ENCODE measurements at regions of chr3 and their contacts with region 1.

Region 1: DNA sequence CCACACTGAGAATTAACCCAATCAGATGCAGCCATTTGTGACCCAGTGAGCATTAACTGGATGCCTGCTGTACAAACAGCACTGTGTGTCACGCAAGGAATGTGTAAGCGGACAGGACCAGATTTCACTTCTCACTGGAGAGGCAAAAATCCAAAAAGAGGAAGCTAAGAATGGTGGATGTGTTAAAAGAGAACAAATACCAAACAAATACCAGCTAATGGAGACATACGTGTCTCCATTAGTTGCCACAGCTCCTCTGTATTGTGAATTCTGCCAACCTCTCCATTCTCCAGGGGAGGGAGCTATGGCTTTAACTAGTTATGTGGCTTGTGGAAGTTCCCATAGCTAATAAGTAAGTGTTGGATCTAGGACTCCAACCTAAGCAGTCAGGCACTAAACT is 2.6 kb downstream of the LTF start:
- DNase-seq: no peak
- H3K4me3 ChIP-seq: no peak overlapping the region
- H3K27me3 ChIP-seq: peaks cover 19% of the 10 kb centered on the region
- CTCF ChIP-seq: peak; percentile 19; the same call in 1 of the 2 replicates

Region 2: DNA sequence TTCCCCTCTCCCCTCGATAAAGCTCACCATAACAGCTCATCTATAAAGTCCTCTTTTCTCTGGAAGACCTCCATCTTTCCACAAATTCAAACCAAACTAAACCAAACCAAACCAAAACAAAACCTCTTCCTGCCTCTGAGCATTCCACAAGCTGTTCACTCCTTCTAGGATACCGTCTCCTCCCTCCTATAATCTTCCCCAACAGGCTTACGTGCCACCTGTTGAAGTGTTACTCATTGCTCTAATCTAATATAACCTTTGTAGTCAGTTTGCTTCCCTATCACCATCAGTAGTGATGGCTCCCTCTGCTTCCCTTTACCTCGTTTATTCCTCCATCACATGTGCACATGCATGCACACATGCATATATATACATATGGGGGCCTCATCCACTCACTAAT is 588.5 kb before region 1 on chr3:
- CTCF ChIA-PET with region 1: no interaction called
- POLR2A ChIA-PET with region 1: interaction called, 11 read pairs
- DNase-seq: no peak
- H3K4me3 ChIP-seq: no peak overlapping the region
- H3K27me3 ChIP-seq: peaks cover 10% of the 10 kb centered on the region
- CTCF ChIP-seq: no peak

Region 3: GRCh38 chr3:46423588-46423987 is 38.5 kb before region 1 on chr3:
- CTCF ChIA-PET with region 1: no interaction called
- POLR2A ChIA-PET with region 1: no interaction called
- DNase-seq: no peak
- H3K4me3 ChIP-seq: no peak overlapping the region
- H3K27me3 ChIP-seq: no peaks in the 10 kb centered on the region
- CTCF ChIP-seq: no peak

Region 4: GRCh38 chr3:46449755-46450552 is 12.2 kb before region 1 on chr3:
- CTCF ChIA-PET with region 1: interaction called, 11 read pairs
- POLR2A ChIA-PET with region 1: no interaction called
- DNase-seq: no peak
- H3K4me3 ChIP-seq: no peak overlapping the region
- H3K27me3 ChIP-seq: peaks cover 9% of the 10 kb centered on the region
- CTCF ChIP-seq: peak; percentile 59